MCF 10A (cell line): ENCODE measurements at regions of chr3 and their contacts with region 1.

Region 1: GRCh38 chr3:197256836-197257444 is 41.5 kb downstream of the DLG1 start:
- DNase-seq: peak; percentile 59
- H3K4me3 Mint-ChIP-seq: no peak overlapping the region
- H3K27ac Mint-ChIP-seq: no peak overlapping the region
- H3K4me1 Mint-ChIP-seq: peaks cover 15% of the 10 kb centered on the region
- H3K27me3 Mint-ChIP-seq: no peaks in the 10 kb centered on the region
- CTCF ChIP-seq: peak; percentile 58

Region 2: GRCh38 chr3:196650740-196651311 is 606.1 kb before region 1 on chr3:
- CTCF ChIA-PET with region 1: no interaction called
- POLR2A ChIA-PET with region 1: no interaction called
- intact Hi-C with region 1: no loop called
- DNase-seq: peak; percentile 97
- H3K4me3 Mint-ChIP-seq: peak overlapping the region; percentile 23
- H3K27ac Mint-ChIP-seq: peak overlapping the region; percentile 67
- H3K4me1 Mint-ChIP-seq: peaks cover 27% of the 10 kb centered on the region
- H3K27me3 Mint-ChIP-seq: no peaks in the 10 kb centered on the region
- CTCF ChIP-seq: no peak

Region 3: GRCh38 chr3:197209366-197210260 is 47.3 kb before region 1 on chr3:
- CTCF ChIA-PET with region 1: no interaction called
- POLR2A ChIA-PET with region 1: no interaction called
- intact Hi-C with region 1: no loop called
- DNase-seq: no peak
- H3K4me3 Mint-ChIP-seq: no peak overlapping the region
- H3K27ac Mint-ChIP-seq: no peak overlapping the region
- H3K4me1 Mint-ChIP-seq: peaks cover 24% of the 10 kb centered on the region
- H3K27me3 Mint-ChIP-seq: no peaks in the 10 kb centered on the region
- CTCF ChIP-seq: no peak

Region 4: DNA sequence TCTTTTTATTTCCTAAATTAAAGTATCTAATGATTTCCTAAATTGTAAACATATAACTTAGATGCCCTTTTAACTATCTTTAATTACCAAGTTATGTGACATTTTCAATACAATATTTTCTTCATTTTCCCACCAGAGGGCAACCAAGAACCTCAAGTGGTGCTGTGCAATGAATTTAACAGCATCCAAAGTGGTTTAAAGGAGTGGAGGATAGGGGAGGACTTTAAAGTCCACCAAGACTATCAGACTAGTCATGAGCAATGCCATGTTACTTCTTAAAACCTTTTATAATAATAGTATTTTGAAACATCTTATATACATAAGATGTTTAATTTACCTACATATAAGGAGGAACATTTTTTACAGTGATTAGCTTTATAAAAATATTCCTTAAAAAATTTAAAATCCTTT is 32.9 kb before region 1 on chr3:
- CTCF ChIA-PET with region 1: interaction called, 27 read pairs
- POLR2A ChIA-PET with region 1: interaction called, 5 read pairs
- intact Hi-C with region 1: no loop called
- DNase-seq: peak; percentile 67
- H3K4me3 Mint-ChIP-seq: no peak overlapping the region
- H3K27ac Mint-ChIP-seq: no peak overlapping the region
- H3K4me1 Mint-ChIP-seq: peaks cover 23% of the 10 kb centered on the region
- H3K27me3 Mint-ChIP-seq: no peaks in the 10 kb centered on the region
- CTCF ChIP-seq: peak; percentile 38

Region 5: DNA sequence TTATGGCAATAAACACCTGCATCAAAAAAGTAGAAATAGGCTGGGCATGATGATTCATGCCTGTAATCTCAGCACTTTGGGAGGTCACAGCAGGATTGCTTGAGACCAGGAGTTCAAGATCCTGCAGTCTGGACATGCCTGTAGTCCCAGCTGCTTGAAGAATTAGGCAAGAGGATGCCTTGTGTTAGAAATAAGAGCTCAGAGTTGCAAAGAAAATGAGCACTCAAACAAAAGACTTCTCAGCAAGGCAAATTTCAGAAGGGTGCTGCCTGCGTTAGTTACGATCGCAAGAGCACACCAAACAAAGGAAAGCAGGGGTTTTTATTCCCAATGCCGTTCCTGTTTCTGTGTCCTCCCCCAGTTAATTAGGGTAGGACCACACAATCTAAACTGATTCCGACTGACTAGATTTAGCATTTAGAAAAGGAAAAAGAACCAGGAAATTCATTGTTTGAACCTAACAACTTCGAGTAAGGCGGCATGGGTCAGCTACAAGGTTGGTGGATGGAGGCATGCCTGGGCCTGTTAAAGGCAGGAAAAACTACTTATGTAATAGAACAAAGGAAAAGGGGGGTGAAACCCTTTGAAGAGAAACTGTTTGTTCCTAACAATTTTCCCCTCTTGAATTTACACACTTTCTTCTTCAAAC is 14.0 kb before region 1 on chr3:
- CTCF ChIA-PET with region 1: interaction called, 27 read pairs
- POLR2A ChIA-PET with region 1: interaction called, 4 read pairs
- intact Hi-C with region 1: no loop called
- DNase-seq: peak; percentile 10
- H3K4me3 Mint-ChIP-seq: no peak overlapping the region
- H3K27ac Mint-ChIP-seq: no peak overlapping the region
- H3K4me1 Mint-ChIP-seq: peaks cover 12% of the 10 kb centered on the region
- H3K27me3 Mint-ChIP-seq: no peaks in the 10 kb centered on the region
- CTCF ChIP-seq: no peak

Region 6: DNA sequence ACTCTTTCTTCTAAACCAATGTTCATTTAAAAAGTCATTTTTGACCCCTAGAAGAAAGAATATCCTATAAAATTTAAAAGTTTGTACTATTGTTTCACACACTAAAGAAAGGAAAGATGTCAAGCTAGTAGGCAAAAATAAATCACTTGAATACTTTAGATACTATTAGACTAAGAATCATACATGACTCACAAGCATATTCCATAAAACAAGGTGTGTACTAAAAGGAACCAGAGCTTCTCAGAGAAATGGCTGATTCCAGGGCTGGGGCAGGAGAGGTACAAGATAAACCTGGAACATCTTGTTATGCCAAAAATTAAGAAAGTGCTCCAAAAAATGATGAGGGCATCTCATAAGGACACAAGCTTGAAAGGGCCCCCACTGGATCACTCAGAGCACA is 32.8 kb after region 1 on chr3:
- CTCF ChIA-PET with region 1: interaction called, 9 read pairs
- POLR2A ChIA-PET with region 1: interaction called, 11 read pairs
- intact Hi-C with region 1: no loop called
- DNase-seq: no peak
- H3K4me3 Mint-ChIP-seq: peak overlapping the region; percentile 5
- H3K27ac Mint-ChIP-seq: peak overlapping the region; percentile 60
- H3K4me1 Mint-ChIP-seq: peaks cover 20% of the 10 kb centered on the region
- H3K27me3 Mint-ChIP-seq: no peaks in the 10 kb centered on the region
- CTCF ChIP-seq: no peak

Region 7: DNA sequence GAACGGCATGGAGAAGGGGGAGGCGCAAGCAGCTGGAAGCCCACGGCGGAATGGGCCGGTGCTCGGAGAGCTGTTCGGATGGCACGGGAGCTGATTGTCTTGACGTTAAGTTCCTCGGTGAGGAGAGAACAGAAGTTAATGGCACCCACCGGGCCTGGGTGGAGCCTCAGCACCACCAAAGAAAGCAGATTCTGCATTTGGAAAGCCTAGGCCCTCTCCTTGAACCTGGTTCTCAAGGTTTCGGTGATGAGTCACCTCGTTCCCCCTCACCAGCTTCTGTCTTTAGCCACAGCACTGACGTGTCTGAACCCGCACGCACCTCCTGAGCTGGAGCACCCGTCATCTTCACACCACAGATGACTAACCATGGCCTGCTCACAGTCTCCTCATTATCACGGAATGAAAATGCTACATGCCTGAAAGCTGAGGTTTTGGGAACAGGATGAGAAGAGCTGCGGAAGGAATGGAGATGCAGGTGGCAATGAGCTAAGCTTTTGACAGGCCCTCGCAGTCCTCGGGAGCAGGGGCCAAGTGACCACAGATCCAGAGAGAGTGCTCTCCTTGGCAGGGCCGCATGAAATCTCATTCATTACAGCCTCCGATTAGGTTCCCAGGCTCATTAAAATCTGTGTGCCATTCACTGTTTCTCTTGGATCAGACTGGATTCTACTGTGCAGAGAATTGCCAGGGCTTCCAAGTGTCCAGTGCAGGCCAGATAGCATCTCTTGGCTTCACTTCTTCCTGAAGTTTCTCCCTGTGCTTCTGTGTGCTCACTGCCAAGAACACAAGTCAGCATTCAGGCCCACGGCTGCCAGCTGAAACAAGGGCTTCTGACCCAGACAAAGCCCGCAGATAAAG is 137.8 kb after region 1 on chr3:
- CTCF ChIA-PET with region 1: interaction called, 16 read pairs
- POLR2A ChIA-PET with region 1: interaction called, 10 read pairs
- intact Hi-C with region 1: no loop called
- DNase-seq: peak; percentile 100
- H3K4me3 Mint-ChIP-seq: peak overlapping the region; percentile 45
- H3K27ac Mint-ChIP-seq: peak overlapping the region; percentile 97
- H3K4me1 Mint-ChIP-seq: peaks cover 24% of the 10 kb centered on the region
- H3K27me3 Mint-ChIP-seq: no peaks in the 10 kb centered on the region
- CTCF ChIP-seq: no peak

Region 8: GRCh38 chr3:197408177-197408957 is 151.4 kb after region 1 on chr3:
- CTCF ChIA-PET with region 1: no interaction called
- POLR2A ChIA-PET with region 1: no interaction called
- intact Hi-C with region 1: no loop called
- DNase-seq: no peak
- H3K4me3 Mint-ChIP-seq: no peak overlapping the region
- H3K27ac Mint-ChIP-seq: no peak overlapping the region
- H3K4me1 Mint-ChIP-seq: no peaks in the 10 kb centered on the region
- H3K27me3 Mint-ChIP-seq: no peaks in the 10 kb centered on the region
- CTCF ChIP-seq: no peak

Region 9: GRCh38 chr3:197501879-197502620 is 245.1 kb after region 1 on chr3:
- CTCF ChIA-PET with region 1: interaction called, 113 read pairs
- POLR2A ChIA-PET with region 1: interaction called, 34 read pairs
- intact Hi-C with region 1: loop called (anchors 1 kb)
- DNase-seq: peak; percentile 96
- H3K4me3 Mint-ChIP-seq: no peak overlapping the region
- H3K27ac Mint-ChIP-seq: no peak overlapping the region
- H3K4me1 Mint-ChIP-seq: peaks cover 9% of the 10 kb centered on the region
- H3K27me3 Mint-ChIP-seq: no peaks in the 10 kb centered on the region
- CTCF ChIP-seq: peak; percentile 89

Region 10: GRCh38 chr3:197516517-197516889 is 259.6 kb after region 1 on chr3:
- CTCF ChIA-PET with region 1: interaction called, 37 read pairs
- POLR2A ChIA-PET with region 1: interaction called, 4 read pairs
- intact Hi-C with region 1: no loop called
- DNase-seq: peak; percentile 97
- H3K4me3 Mint-ChIP-seq: peak overlapping the region; percentile 18
- H3K27ac Mint-ChIP-seq: peak overlapping the region; percentile 67
- H3K4me1 Mint-ChIP-seq: peaks cover 23% of the 10 kb centered on the region
- H3K27me3 Mint-ChIP-seq: no peaks in the 10 kb centered on the region
- CTCF ChIP-seq: no peak

Region 11: DNA sequence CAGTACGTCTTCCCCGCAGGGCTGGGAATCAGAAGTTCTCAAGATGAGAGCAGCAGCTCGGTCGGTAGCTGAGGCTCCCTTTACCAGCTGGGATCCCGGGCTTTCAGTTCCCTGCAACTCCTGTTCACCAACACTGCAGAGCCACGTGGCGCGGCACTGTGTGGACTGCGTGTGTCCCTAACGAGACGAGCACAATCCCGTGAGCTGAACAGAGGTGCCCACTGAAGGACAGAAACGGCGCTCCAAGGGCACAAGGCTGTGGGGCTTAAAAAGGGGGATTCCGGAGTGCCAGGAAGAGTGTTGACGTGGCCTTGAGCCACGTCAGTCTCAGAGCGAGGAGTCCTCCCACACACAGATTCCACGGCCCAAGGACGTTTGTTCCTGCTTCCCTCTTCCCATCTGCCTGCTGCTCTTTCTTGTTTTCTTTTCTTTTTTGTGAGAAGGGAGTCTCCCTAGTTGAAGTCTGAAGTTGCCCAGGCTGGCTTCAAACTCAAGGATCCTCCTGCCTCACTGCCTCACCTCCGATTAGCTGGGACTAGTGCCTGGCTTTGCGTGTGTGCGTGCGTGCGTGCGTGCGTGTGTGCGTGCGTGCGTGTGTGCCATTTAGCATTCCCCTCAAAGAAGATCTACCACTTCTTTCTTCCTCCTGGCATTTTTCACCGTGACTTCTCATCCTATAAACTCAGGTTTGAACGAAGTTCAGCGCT is 656.0 kb after region 1 on chr3:
- CTCF ChIA-PET with region 1: no interaction called
- POLR2A ChIA-PET with region 1: no interaction called
- intact Hi-C with region 1: no loop called
- DNase-seq: no peak
- H3K4me3 Mint-ChIP-seq: no peak overlapping the region
- H3K27ac Mint-ChIP-seq: no peak overlapping the region
- H3K4me1 Mint-ChIP-seq: no peaks in the 10 kb centered on the region
- H3K27me3 Mint-ChIP-seq: no peaks in the 10 kb centered on the region
- CTCF ChIP-seq: no peak